Ascending aorta (tissue), 2 donors: ENCODE measurements at regions of chr20 and their contacts with region 1.

Region 1: GRCh38 chr20:52083627-52084232 is 107.8 kb downstream of the ZFP64 start:
- DNase-seq: no peak
- H3K4me3 ChIP-seq: no peak overlapping the region
- H3K27ac ChIP-seq: no peak overlapping the region
- H3K4me1 ChIP-seq: no peaks in the 10 kb centered on the region
- H3K27me3 ChIP-seq: no peaks in the 10 kb centered on the region
- CTCF ChIP-seq: peak; percentile 13 to 61 (median 27)

Region 2: GRCh38 chr20:50987592-50988210 is 1096.0 kb before region 1 on chr20:
- intact Hi-C with region 1: loop called (anchors 5 kb)
- DNase-seq: peak in 1 of 2 donors; percentile 87
- H3K4me3 ChIP-seq: no peak overlapping the region
- H3K27ac ChIP-seq: no peak overlapping the region
- H3K4me1 ChIP-seq: no peaks in the 10 kb centered on the region
- H3K27me3 ChIP-seq: no peaks in the 10 kb centered on the region
- CTCF ChIP-seq: peak; percentile 81 to 93 (median 87)

Region 3: DNA sequence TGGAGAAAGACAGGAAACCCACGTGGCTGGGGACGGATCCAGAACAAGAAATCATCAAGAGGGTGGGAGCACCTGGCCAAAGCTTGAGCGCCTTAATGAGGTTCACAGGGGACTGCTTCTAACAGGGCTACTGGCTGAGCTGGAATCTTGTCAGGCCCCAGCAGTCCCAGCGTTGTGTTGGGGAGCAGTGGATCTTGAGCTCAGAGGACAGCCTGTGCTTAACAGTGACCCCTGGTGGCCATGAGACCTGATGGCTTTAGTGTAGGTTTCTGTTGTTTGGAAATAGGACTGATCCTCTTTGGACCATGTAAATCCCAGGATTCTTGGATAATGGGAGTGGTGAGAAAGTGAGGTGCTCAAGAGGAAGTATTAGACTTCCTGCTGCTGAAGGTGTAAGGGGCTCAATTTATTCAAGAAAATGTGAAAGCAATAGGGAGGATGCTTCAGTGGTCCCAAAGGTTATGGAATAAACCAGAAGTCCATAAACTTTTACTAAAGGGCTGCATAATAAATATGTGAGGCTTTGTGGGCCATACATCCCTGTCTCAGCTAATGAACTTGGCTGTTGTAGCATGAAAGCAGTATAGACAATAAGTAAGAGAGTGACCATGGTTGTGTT is 757.4 kb before region 1 on chr20:
- intact Hi-C with region 1: no loop called
- DNase-seq: no peak
- H3K4me3 ChIP-seq: no peak overlapping the region
- H3K27ac ChIP-seq: no peak overlapping the region
- H3K4me1 ChIP-seq: no peaks in the 10 kb centered on the region
- H3K27me3 ChIP-seq: no peaks in the 10 kb centered on the region
- CTCF ChIP-seq: peak in 2 of 3 experiments; percentile 32 to 46

Region 4: DNA sequence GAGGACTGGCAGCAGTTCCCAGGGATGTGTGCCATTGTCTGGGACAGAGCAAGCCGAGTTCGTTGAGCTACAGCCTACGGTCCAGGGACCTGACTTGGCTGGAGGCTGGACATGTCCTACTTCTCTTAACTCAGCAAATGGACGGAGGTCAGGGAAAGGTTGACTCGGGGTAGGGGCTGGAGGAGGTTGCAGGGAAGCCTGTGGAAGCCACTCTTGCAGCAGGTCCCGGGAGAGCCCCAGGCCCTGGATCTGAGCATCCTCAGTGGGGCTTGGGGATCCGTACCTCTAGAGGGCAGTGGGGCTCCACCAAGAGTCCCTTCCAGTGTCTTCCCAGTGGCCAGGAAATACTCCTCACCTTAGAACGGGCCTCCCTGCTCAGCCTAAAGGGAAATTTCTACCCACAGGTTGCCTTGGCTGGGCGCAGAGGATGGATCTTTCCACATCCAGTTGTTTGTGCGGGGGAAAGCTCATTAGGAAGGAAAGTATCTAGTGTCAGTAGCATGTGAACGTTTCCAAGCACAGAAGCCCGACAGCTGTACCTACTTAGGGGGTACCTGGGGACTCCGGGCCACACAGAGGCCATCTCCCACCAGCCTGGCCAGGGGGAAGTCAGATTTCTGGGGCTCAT is 711.4 kb before region 1 on chr20:
- intact Hi-C with region 1: loop called (anchors 5 kb)
- DNase-seq: peak in 1 of 2 donors; percentile 76
- H3K4me3 ChIP-seq: no peak overlapping the region
- H3K27ac ChIP-seq: no peak overlapping the region
- H3K4me1 ChIP-seq: peaks cover 0 to 3% of the 10 kb centered on the region in 2 donors
- H3K27me3 ChIP-seq: no peaks in the 10 kb centered on the region
- CTCF ChIP-seq: peak; percentile 66 to 89 (median 84)

Region 5: DNA sequence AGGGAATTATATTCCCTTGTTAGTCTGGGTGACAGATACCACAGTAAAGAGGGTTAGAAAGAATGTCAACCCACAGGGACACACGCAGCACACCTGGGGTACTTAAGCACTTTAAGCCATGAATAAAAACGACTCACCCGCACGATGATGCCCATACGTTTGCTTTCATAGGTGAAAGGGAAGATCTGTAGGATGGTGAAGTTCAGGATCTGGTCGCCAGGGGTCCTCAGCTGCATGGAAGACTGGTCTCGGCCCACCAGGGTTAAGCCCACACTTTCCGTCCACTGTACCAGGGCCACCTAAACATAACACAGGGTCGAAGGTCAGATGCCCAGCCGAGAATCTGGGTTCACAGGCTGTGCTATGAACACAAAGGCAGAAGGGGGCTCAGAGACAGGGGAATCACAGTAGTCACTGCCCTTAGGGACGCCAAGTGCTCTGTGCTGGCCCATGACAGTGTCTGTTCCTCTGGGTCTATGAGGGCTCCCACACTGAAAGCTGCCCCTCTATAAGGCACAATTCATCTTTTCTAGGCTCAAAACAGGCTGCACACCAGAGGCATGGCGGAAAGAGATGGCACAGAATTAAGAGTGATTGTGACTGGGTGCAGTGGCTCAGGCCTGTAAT is 444.4 kb before region 1 on chr20:
- intact Hi-C with region 1: loop called (anchors 1 kb)
- DNase-seq: peak in 1 of 2 donors; percentile 71
- H3K4me3 ChIP-seq: no peak overlapping the region
- H3K27ac ChIP-seq: no peak overlapping the region
- H3K4me1 ChIP-seq: no peaks in the 10 kb centered on the region
- H3K27me3 ChIP-seq: no peaks in the 10 kb centered on the region
- CTCF ChIP-seq: peak; percentile 67 to 84 (median 75)

Region 6: DNA sequence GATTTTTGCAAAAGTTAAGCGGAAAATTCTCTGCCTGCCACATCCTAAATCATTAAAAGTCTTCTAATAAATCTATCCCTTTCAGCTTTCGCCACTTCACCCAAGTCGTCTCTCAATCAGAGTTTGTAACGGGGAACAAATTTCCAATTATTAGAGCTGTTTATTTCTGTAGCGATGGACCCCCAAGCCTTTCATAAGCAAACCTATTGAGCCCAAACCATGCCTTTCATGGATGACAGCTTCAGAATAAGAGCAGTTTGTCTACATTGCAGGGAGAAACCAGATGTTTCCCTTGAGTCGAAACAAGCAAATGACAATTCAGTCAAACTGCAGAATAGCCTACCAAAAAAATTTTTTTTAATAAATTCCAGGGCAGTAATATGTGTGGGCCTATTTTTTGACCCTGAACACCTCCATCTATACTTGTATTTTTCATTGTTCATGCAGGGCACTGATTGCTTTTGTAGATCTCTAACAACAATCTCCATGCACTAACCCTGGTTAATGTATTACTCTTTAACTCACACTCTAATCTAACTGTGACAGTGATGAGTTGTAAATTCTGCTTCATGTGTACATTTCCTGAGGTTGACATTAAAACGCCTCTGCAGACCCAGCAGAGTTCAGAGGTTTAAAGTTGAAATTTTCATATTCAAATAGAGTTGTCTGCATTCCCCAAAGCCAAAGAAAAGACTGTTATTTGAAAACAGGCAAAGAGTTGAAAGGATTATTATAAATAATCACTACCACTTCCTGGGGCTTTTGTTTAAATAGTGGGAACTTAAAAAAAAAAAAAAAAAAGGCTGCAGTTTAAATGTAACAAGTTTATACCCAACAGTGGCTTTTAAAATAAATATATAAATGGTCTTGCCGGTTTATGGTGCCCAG is 380.1 kb before region 1 on chr20:
- intact Hi-C with region 1: loop called (anchors 10 kb)
- DNase-seq: no peak
- H3K4me3 ChIP-seq: no peak overlapping the region
- H3K27ac ChIP-seq: no peak overlapping the region
- H3K4me1 ChIP-seq: no peaks in the 10 kb centered on the region
- H3K27me3 ChIP-seq: no peaks in the 10 kb centered on the region
- CTCF ChIP-seq: no peak

Region 7: DNA sequence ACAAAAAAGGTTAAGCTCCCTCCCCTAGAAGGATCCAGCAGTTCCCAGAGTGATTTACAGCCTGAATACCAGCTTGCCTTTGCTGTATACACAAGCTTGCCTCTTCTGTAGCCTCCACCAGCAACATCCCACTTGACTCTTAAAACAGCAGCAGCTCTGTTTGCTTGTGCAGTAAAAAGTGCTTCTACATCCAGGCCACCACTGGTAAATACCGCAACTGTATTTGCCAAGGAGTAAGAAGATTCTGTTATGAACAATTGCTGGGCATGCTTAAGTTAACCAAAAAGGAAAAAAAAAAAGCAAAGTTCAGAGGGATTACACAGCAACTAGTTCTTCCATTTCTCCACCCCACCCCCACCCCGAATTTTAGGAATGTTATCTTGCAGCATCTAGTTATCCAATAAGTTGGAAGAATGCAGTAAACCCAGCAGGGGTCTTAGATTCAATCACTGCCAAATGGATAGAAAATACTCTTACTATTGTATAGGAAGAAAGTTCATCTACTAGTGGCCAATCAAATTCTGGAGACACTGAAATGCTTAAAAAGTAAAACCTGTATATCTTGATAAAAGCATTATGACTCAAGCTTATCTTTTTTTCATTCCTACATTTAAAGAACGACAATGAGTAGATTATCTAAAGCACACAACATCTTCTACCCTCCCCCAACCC is 286.2 kb before region 1 on chr20:
- intact Hi-C with region 1: loop called (anchors 10 kb)
- DNase-seq: no peak
- H3K4me3 ChIP-seq: no peak overlapping the region
- H3K27ac ChIP-seq: no peak overlapping the region
- H3K4me1 ChIP-seq: peaks cover 11 to 17% of the 10 kb centered on the region in 2 donors
- H3K27me3 ChIP-seq: peaks cover 26% of the 10 kb centered on the region
- CTCF ChIP-seq: no peak

Region 8: GRCh38 chr20:52071136-52071535 is 12.6 kb before region 1 on chr20:
- intact Hi-C with region 1: no loop called
- DNase-seq: no peak
- H3K4me3 ChIP-seq: no peak overlapping the region
- H3K27ac ChIP-seq: no peak overlapping the region
- H3K4me1 ChIP-seq: no peaks in the 10 kb centered on the region
- H3K27me3 ChIP-seq: no peaks in the 10 kb centered on the region
- CTCF ChIP-seq: no peak